ENCODE measurements at regions of chr6 and their contacts with region 1.

Region 1: DNA sequence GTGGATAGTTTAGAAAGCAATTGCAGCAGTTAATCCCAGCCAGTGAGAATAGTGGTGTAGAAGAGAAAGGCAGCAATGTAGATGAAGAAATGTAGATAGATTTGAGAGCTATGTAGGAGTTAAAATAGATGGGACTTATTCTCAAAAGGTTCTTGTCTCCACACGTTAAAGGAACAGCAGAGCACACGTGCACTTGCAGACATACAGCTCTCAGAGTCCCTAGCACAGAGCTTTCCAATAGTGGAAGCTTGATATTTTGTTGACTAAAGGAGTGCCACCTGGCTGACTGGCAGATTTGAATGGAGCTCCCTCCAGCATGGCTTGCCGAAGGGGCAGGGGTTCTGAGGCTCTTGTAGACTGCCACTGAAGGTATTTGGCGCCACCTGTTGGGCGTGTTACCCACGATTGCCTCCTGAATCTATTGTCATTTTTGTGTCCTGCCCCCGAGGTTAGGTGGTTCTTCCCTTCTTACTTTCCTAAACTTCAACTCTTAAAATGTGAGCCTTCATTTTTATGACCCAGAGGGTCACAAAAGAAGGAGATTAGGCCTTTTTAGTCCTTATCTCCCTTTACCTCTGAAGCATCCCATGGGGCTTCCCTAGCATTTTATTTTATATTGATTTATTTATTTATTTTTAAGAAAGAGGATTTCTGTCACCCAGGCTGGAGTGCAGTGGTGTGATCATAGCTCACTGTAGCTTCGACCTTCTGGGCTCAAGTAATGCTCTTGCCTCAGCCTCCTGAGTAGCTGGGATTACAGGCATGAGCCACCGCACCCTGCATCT is 16.4 kb downstream of the BRD2 start:
- DNase-seq: peak; percentile 69 to 87 (median 84)
- ATAC-seq: peak; percentile 86
- H3K4me3 ChIP-seq: no peak overlapping the region
- H3K4me3 Mint-ChIP-seq: peak overlapping the region in 1 of 10 donors; percentile 4
- H3K27ac ChIP-seq: no peak overlapping the region
- H3K27ac Mint-ChIP-seq: peak overlapping the region in 6 of 9 donors; percentile 34 to 75 (median 46)
- H3K4me1 ChIP-seq: peaks cover 0 to 6% of the 10 kb centered on the region in 2 donors
- H3K4me1 Mint-ChIP-seq: peaks cover 15 to 29% (median 22%) of the 10 kb centered on the region in 7 donors
- H3K27me3 ChIP-seq: no peaks in the 10 kb centered on the region
- H3K27me3 Mint-ChIP-seq: no peaks in the 10 kb centered on the region

Region 2: GRCh38 chr6:32742374-32742773 is 242.4 kb before region 1 on chr6:
- CTCF ChIA-PET with region 1: no interaction called
- POLR2A ChIA-PET with region 1: no interaction called
- intact Hi-C with region 1: no loop called
- DNase-seq: no peak
- ATAC-seq: no peak
- H3K4me3 ChIP-seq: no peak overlapping the region
- H3K4me3 Mint-ChIP-seq: no peak overlapping the region
- H3K27ac ChIP-seq: no peak overlapping the region
- H3K27ac Mint-ChIP-seq: no peak overlapping the region
- H3K4me1 ChIP-seq: no peaks in the 10 kb centered on the region
- H3K4me1 Mint-ChIP-seq: peaks cover 0 to 4% (median 0%) of the 10 kb centered on the region in 7 donors
- H3K27me3 ChIP-seq: peaks cover 0 to 4% of the 10 kb centered on the region in 2 donors
- H3K27me3 Mint-ChIP-seq: peaks cover 26 to 46% (median 41%) of the 10 kb centered on the region in 5 donors

Region 3: GRCh38 chr6:32885698-32886286 is 99.0 kb before region 1 on chr6:
- CTCF ChIA-PET with region 1: interaction called, 51 read pairs
- POLR2A ChIA-PET with region 1: interaction called, 6 read pairs
- intact Hi-C with region 1: loop called (anchors 1 kb)
- DNase-seq: peak in 7 of 9 donors; percentile 48 to 78 (median 68)
- ATAC-seq: peak; percentile 69
- H3K4me3 ChIP-seq: no peak overlapping the region
- H3K4me3 Mint-ChIP-seq: no peak overlapping the region
- H3K27ac ChIP-seq: no peak overlapping the region
- H3K27ac Mint-ChIP-seq: no peak overlapping the region
- H3K4me1 ChIP-seq: no peaks in the 10 kb centered on the region
- H3K4me1 Mint-ChIP-seq: peaks cover 0 to 4% (median 0%) of the 10 kb centered on the region in 7 donors
- H3K27me3 ChIP-seq: no peaks in the 10 kb centered on the region
- H3K27me3 Mint-ChIP-seq: peaks cover 0 to 10% (median 0%) of the 10 kb centered on the region in 5 donors

Region 4: GRCh38 chr6:32894080-32895005 is 90.5 kb before region 1 on chr6:
- CTCF ChIA-PET with region 1: interaction called, 11 read pairs
- POLR2A ChIA-PET with region 1: interaction called, 15 read pairs
- intact Hi-C with region 1: no loop called
- DNase-seq: peak; percentile 89 to 98 (median 94)
- ATAC-seq: peak; percentile 99
- H3K4me3 ChIP-seq: peak overlapping the region; percentile 81
- H3K4me3 Mint-ChIP-seq: peak overlapping the region; percentile 91 to 100 (median 99)
- H3K27ac ChIP-seq: peak overlapping the region; percentile 78
- H3K27ac Mint-ChIP-seq: peak overlapping the region; percentile 78 to 97 (median 94)
- H3K4me1 ChIP-seq: peaks cover 12 to 13% of the 10 kb centered on the region in 2 donors
- H3K4me1 Mint-ChIP-seq: peaks cover 30 to 43% (median 36%) of the 10 kb centered on the region in 7 donors
- H3K27me3 ChIP-seq: no peaks in the 10 kb centered on the region
- H3K27me3 Mint-ChIP-seq: peaks cover 0 to 4% (median 0%) of the 10 kb centered on the region in 5 donors

Region 5: DNA sequence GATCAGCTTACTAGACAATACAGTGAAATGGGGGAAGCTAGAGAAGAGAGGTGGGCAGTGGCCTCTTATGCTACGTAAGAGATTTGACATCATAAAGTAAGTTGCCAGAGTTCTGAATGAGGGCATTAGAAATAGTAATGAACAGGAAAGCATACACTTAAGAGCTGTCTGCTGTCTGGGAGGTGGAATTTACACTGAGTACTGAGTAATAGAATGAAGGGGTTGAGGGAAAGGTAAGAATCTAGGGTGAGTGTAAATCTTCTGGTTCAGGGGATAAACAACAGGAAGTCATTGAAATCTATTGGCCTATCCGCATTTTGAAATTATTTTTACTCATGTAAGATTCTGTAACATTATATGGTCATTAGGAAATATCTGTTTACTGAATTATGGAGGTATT is 79.7 kb before region 1 on chr6:
- CTCF ChIA-PET with region 1: interaction called, 12 read pairs
- POLR2A ChIA-PET with region 1: no interaction called
- intact Hi-C with region 1: no loop called
- DNase-seq: no peak
- ATAC-seq: no peak
- H3K4me3 ChIP-seq: no peak overlapping the region
- H3K4me3 Mint-ChIP-seq: no peak overlapping the region
- H3K27ac ChIP-seq: no peak overlapping the region
- H3K27ac Mint-ChIP-seq: peak overlapping the region in 1 of 9 donors; percentile 42
- H3K4me1 ChIP-seq: no peaks in the 10 kb centered on the region
- H3K4me1 Mint-ChIP-seq: peaks cover 0 to 6% (median 0%) of the 10 kb centered on the region in 7 donors
- H3K27me3 ChIP-seq: no peaks in the 10 kb centered on the region
- H3K27me3 Mint-ChIP-seq: peaks cover 0 to 13% (median 0%) of the 10 kb centered on the region in 5 donors

Region 6: DNA sequence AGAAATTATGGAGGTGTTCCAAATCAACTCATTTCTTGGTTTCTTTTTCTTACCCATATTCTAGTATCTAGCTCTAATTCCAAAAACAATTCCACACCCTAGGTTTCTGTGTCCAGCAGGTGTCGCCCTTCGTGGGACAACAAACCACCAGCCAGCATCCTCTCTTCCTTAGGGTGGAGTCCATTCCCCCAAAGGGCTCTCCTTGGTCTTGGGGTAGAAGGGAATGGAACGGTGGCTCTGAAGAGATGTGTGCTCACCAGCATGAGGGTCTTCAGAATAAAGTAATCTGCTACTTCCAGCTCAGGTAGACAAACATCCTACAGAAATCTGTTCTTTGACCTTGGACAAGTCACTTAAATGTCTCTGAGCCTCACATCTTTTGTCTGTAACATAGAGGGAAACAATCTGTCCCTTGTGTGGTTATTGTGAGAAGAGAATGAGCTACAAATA is 51.1 kb before region 1 on chr6:
- CTCF ChIA-PET with region 1: interaction called, 157 read pairs
- POLR2A ChIA-PET with region 1: interaction called, 614 read pairs
- intact Hi-C with region 1: loop called (anchors 1 kb)
- DNase-seq: peak; percentile 47 to 77 (median 67)
- ATAC-seq: peak; percentile 79
- H3K4me3 ChIP-seq: no peak overlapping the region
- H3K4me3 Mint-ChIP-seq: no peak overlapping the region
- H3K27ac ChIP-seq: no peak overlapping the region
- H3K27ac Mint-ChIP-seq: peak overlapping the region in 2 of 9 donors; percentile 32 to 45
- H3K4me1 ChIP-seq: no peaks in the 10 kb centered on the region
- H3K4me1 Mint-ChIP-seq: peaks cover 0 to 24% (median 6%) of the 10 kb centered on the region in 7 donors
- H3K27me3 ChIP-seq: no peaks in the 10 kb centered on the region
- H3K27me3 Mint-ChIP-seq: peaks cover 0 to 35% (median 0%) of the 10 kb centered on the region in 5 donors

Region 7: DNA sequence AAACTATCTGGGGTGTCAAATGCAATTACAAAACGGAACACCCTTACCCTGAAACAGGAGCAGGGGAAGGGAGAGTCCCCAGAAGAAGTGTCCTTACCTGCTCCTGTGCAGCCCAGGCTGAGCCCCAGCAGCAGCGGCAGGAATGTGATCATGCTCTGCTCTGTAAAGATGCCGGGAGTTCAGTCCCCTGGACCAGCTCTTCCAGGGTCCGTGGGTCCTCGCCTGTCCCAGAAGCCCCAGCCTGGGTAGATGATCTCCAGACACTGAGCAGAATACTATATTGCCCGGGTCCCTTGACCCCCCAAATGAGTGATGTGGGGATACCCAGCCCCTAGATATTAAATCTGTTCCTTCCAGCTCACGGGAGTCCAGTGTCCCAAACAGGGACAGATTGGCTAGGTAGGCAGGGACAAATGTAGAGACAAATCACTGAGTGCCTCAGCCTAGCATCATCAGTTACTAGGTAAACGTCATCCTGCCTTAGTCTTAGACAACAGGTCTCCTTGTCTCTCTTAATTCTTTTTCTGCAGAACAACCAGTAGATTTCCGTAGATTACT is 44.1 kb before region 1 on chr6 and contains the start of gene HLA-DMB:
- CTCF ChIA-PET with region 1: interaction called, 157 read pairs
- POLR2A ChIA-PET with region 1: interaction called, 614 read pairs
- intact Hi-C with region 1: no loop called
- DNase-seq: peak in 7 of 9 donors; percentile 64 to 80 (median 74)
- ATAC-seq: peak; percentile 86
- H3K4me3 ChIP-seq: peak within 1 kb of the TSS; percentile 66
- H3K4me3 Mint-ChIP-seq: peak within 1 kb of the TSS; percentile 85 to 97 (median 94)
- H3K27ac ChIP-seq: peak within 1 kb of the TSS; percentile 75
- H3K27ac Mint-ChIP-seq: peak within 1 kb of the TSS; percentile 95 to 98 (median 96)
- H3K4me1 ChIP-seq: peaks cover 50 to 55% of the 10 kb centered on the region in 2 donors
- H3K4me1 Mint-ChIP-seq: peaks cover 55 to 67% (median 62%) of the 10 kb centered on the region in 7 donors
- H3K27me3 ChIP-seq: no peaks in the 10 kb centered on the region
- H3K27me3 Mint-ChIP-seq: peaks cover 0 to 7% (median 0%) of the 10 kb centered on the region in 5 donors
- total RNA-seq, gene HLA-DMB: 7.8 to 82.5 (median 9.1) TPM

Region 8: DNA sequence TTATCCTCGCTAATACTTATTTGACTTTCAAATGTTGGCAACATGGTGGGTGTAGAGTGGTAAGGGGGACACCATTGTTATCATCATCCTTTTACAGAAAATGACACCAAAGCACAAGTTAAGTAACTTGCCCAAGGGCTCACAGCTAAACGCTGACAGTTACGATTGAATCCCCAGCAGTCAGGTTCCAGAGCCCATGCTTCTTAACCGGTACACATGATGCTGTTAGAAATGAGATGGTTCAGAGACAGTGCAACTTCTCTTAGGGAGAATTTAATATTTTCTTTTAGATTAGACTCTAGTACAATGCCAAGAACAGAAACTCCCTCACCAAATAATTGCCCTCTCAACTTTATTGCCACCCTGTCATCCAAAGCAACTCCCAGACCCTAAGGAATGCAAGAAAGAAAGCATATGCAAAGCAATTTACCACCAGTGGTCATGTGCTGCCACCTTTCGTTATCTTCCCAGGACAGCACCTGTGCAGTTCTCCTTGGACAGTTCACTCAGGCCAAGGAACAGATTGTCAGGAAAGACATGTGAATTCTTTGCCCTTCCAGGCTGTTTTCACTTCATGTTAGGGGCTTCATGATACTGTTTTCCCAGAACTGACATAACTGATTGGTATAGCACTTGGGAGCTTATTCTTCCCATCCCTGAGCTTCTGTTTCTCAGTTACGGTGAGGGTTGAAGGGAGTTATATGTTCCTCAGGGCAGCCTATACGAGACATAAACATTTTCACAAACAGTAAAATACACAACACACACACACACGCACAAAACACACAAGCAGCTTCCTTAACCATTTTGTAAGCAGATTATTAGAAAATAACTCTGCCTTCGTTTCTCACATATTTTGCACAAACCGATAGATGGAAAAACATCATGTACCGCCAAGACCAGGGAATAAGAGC is 37.0 kb before region 1 on chr6:
- CTCF ChIA-PET with region 1: interaction called, 78 read pairs
- POLR2A ChIA-PET with region 1: interaction called, 638 read pairs
- intact Hi-C with region 1: loop called in 1 of 2 experiments (anchors 1 kb)
- DNase-seq: peak in 6 of 9 donors; percentile 19 to 54 (median 36)
- ATAC-seq: peak; percentile 37
- H3K4me3 ChIP-seq: no peak overlapping the region
- H3K4me3 Mint-ChIP-seq: no peak overlapping the region
- H3K27ac ChIP-seq: no peak overlapping the region
- H3K27ac Mint-ChIP-seq: peak overlapping the region in 1 of 9 donors; percentile 47
- H3K4me1 ChIP-seq: peaks cover 32 to 45% of the 10 kb centered on the region in 2 donors
- H3K4me1 Mint-ChIP-seq: peaks cover 54 to 73% (median 63%) of the 10 kb centered on the region in 7 donors
- H3K27me3 ChIP-seq: no peaks in the 10 kb centered on the region
- H3K27me3 Mint-ChIP-seq: no peaks in the 10 kb centered on the region